Ovary (tissue), 10 donors: ENCODE measurements at regions of chr7 and their contacts with region 1.

Region 1: DNA sequence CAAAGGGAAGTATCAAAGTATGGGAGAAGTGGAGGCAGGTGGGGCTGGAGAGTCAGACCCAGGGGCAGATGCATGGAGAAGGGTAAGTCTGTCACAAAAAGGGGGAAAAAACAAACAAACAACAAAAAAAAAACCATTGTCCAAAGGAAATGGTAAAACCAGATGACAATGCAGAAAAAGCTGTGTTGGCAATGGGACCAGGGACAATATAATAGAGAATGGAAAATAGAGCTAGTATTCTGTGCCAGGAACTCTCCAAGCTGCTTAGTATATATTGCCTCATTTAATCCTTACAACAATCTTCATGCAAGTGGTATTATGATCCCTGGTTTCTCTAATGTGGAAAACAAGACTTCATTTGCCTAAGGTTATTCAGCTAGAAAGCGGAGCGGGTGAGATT is 13.1 kb upstream of the KDM7A start:
- DNase-seq: no peak
- H3K4me3 ChIP-seq: no peak overlapping the region
- H3K27ac ChIP-seq: no peak overlapping the region
- H3K4me1 ChIP-seq: no peaks in the 10 kb centered on the region
- H3K27me3 ChIP-seq: no peaks in the 10 kb centered on the region
- CTCF ChIP-seq: no peak
- EP300 ChIP-seq: no peak
- POLR2A ChIP-seq: no peak

Region 2: DNA sequence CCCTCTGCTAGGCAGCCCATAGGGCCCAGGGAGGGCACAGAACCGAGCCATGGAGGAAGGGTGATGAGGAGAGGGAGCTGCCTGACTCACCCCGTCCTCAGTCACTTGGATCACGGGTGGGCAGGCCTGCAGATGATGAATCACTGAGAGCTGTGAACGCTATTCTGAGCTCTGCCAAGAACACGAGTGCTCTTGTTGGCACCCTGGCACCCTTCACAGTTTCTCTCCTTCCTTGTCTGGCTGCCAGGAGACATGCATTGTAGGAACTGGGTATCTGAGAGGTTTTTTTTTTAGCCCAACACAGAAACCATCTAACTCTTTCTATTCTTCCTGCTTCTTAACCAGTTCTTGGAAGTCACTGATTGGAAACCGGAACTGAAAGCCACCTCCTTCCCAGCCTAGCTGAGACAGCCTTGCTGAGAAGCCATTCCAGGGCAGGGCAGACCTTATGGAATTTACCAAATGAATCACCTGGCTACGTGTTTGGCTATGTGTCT is 126.3 kb after region 1 on chr7:
- intact Hi-C with region 1: loop called in 1 of 4 experiments (anchors 10 kb)
- DNase-seq: peak; percentile 53 to 67 (median 58)
- H3K4me3 ChIP-seq: peak overlapping the region; percentile 19
- H3K27ac ChIP-seq: peak overlapping the region; percentile 15 to 71
- H3K4me1 ChIP-seq: peaks cover 4% of the 10 kb centered on the region
- H3K27me3 ChIP-seq: no peaks in the 10 kb centered on the region
- CTCF ChIP-seq: no peak
- EP300 ChIP-seq: no peak
- POLR2A ChIP-seq: no peak